SK-N-SH (cell line): ENCODE measurements at regions of chr21 and their contacts with region 1.

Region 1: DNA sequence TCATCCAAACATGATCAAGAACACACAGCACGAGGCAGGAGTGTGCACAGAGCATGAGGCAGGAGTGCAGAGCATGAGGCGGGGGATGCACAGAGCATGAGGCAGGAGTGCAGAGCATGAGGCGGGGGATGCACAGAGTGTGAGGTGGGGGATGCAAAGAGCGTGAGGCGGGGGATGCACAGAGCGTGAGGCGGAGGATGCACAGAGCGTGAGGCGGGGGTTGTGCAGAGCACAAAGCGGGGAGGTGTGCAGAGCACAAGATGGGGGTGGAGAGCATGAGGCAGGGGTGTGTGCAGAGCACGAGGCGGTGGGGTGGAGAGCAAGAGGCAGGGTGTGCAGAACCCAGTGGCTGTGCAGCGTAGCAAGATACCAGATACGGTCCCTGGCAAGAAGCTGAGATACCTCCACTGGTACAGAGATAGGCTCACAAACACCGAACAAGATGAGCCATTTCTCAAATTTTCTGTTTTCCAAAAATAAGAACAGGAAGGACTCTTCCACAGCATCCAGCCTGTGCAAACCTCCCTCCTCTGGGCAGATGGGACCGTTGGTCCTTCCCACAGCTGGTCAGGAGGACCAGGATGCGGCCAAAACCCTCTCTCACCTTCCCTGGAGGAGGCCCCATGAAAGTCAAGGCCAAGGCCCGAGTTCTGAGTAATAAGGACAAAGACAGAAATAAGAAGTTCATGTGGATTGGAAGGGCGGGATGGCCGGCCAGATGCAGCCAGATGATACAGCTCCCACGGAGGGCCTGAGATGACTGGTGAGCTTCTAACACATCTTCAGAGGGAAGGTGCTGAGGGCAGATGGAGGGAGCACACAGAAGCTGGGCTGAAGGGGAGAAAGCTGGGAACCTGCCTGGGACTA is 12.0 kb downstream of the SPATC1L start:
- DNase-seq: no peak
- H3K4me3 ChIP-seq: no peak overlapping the region
- H3K27ac ChIP-seq: no peak overlapping the region
- H3K4me1 ChIP-seq: no peaks in the 10 kb centered on the region
- H3K27me3 ChIP-seq: no peaks in the 10 kb centered on the region
- CTCF ChIP-seq: no peak
- EP300 ChIP-seq: no peak
- RAD21 ChIP-seq: no peak

Region 2: DNA sequence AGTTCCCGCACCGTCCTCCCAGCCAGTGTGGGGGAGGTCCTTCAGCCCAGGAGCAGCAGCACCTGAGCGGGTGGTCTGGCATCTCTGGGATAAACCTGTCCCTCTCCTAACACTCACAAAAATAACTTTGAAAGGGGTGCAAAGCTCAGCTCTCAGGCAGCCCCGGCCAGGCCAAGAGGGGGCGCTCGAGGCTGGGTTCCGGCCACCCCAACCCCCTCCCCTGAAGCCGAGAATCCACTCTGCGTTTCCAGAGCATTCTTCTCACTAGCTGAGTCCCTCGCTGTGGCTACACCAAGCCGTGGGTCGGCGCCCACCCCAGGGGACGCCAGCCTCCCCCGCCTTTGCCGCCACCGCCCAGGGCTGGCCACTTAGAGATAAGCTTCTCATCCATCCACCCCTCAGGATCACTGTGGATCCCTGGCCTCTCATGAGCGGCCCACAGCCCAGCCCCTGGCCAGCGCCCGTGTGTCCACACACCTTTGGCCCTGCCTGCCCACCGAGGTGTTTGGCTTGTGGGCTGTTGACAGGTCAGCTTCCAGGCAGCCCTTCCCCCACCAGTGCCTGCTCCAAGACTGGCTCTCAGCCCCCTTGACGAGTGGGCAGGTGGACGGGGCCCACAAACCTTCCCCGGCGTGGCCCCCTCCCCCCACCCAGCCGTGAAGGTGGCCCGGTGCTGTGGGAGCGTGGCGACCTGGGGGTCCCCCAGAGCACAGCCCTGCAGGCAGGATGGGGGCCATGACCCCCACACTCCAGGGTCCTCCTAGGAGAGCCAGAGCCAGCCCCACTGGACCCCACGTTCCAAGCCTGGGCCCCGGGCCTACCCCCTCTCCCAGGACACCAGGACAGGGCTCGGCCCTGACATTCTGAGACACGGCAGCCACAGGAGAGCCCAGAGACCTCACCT is 18.7 kb before region 1 on chr21:
- CTCF ChIA-PET with region 1: interaction called, 11 read pairs
- POLR2A ChIA-PET with region 1: no interaction called
- DNase-seq: peak; percentile 92
- H3K4me3 ChIP-seq: no peak overlapping the region; a peak in 1 of 4 replicates
- H3K27ac ChIP-seq: no peak overlapping the region; a peak in 1 of 4 replicates
- H3K4me1 ChIP-seq: peaks cover 0 to 4% of the 10 kb centered on the region in 2 experiments; a peak in 2 of 4 replicates
- H3K27me3 ChIP-seq: no peaks in the 10 kb centered on the region
- CTCF ChIP-seq: peak; percentile 75
- EP300 ChIP-seq: no peak
- RAD21 ChIP-seq: peak; percentile 63